Lower leg skin (tissue), 4 donors: ENCODE measurements at regions of chr6 and their contacts with region 1.

Region 1: DNA sequence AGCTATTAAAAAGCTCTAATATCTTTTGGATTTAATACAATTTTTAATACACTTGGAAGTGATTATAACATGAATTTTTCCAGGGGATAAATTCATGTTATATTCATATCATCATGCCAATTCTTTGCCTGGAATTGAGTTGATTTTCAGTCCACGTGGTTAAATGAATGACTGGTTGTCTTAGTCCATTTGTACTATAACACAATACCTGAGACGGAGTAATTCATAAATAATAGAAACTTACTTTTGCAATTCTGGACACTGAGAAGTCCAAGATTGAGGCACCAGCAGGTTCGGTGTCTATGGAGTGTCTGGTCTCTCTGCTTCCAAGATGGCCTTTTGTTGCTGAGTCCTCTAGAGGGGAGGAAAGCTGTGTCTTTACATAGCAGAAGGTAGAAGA is 66.2 kb upstream of the TRDN start:
- DNase-seq: no peak
- H3K4me3 ChIP-seq: no peak overlapping the region
- CTCF ChIP-seq: no peak
- POLR2A ChIP-seq: no peak

Region 2: DNA sequence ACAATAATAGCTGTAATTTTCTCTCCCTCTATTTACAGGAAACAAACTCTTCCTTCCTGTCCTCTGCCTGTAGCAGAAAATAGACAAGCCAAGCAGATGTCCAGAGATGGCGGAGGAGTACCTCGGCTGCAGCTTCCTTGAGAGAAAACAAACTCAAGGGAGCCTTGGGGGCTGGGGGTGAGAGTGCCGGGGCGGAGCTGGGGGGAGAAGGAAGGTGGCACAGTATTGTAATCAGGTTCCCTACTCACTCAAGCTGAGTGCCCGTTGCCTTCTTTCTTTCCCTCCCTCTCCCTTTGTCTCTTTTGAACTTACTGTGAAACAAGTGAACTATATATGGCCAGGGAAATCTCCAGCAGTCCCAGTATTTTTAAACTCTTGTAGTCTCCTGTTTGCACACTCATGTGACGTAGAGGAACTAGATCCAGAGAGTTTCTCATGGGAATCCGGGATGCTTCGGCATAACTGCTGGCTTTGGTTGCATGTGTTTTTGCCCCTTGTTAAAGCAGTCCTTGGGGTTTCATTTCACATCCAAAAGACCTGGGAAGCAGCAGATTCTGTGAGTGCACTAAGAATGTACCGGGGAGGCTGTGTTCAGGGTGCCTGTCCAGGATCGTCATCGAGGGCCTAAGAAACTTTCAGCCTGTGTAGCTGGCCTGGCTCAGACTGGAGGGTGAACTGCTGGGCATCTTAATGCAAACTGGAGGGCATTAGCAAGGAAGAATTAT is 1643.4 kb after region 1 on chr6:
- intact Hi-C with region 1: loop called (anchors 5 kb)
- DNase-seq: no peak
- H3K4me3 ChIP-seq: no peak overlapping the region
- CTCF ChIP-seq: no peak
- POLR2A ChIP-seq: no peak